ENCODE measurements at regions of chr12 and their contacts with region 1.

Region 1: GRCh38 chr12:95815635-95816212 is 25.2 kb upstream of the NTN4 start:
- DNase-seq: peak in 1 of 2 experiments; percentile 45
- H3K4me3 ChIP-seq: no peak overlapping the region
- H3K4me1 ChIP-seq: no peaks in the 10 kb centered on the region
- H3K27me3 ChIP-seq: peaks cover 3% of the 10 kb centered on the region; the same call in 1 of the 2 replicates

Region 2: GRCh38 chr12:95582230-95583058 is 233.3 kb before region 1 on chr12:
- in situ Hi-C with region 1: loop called (anchors 5 kb)
- DNase-seq: peak in 1 of 2 experiments; percentile 69
- H3K4me3 ChIP-seq: no peak overlapping the region
- H3K4me1 ChIP-seq: no peaks in the 10 kb centered on the region; the same call in 1 of the 2 replicates
- H3K27me3 ChIP-seq: no peaks in the 10 kb centered on the region; the same call in 1 of the 2 replicates

Region 3: GRCh38 chr12:97075161-97075953 is 1259.6 kb after region 1 on chr12:
- in situ Hi-C with region 1: no loop called
- DNase-seq: no peak
- H3K4me3 ChIP-seq: no peak overlapping the region
- H3K4me1 ChIP-seq: no peaks in the 10 kb centered on the region
- H3K27me3 ChIP-seq: no peaks in the 10 kb centered on the region